ENCODE measurements at regions of chr10 and their contacts with region 1.

Region 1: DNA sequence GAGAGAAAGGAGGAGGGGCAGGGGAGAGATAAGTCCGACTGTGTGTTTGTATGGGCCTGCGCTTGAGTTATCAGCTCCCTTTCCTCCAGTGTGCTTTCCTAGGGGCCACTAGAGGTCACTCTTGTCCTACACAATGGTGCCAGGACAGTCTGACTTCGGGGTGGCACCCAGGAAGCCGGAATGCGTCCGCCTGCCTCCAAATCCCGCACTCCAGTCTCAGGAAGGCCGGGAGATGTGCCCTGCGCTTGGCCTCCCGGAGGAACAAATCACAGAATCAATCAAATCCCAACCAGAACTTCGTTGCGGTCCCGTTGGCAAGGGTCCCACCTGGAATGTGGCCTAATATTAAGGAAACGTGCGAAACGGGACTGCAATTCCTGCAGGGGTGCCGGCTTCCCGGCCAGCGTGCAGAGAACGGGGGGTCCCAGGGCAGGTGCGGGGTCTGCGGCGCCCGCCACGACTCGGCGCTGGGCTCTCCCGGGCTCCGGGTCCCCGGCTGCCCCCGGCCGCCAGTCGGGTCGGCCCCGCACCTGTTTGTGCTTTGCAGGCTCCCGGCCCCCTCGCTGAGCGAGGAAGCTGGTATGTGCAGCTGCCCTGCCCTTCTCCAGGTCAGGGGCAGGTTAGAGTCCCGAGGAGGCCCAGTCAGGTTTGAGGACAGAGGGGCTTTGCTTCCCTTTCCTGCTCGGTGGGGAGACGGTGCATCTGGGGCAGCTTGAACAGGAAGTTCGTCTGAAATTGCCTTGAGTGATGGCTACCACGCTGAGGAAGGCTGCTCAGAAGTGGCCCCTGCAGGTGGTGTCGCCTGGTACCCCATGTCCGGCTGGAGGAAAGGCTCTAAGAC is 21.0 kb upstream of the HPS1 start:
- DNase-seq: peak; percentile 79
- ATAC-seq: peak; percentile 99
- H3K4me3 ChIP-seq: peak overlapping the region; percentile 54 to 75 (median 57)
- H3K27ac ChIP-seq: no peak overlapping the region
- H3K4me1 ChIP-seq: no peaks in the 10 kb centered on the region
- H3K27me3 ChIP-seq: peaks cover 4 to 23% of the 10 kb centered on the region in 2 experiments
- CTCF ChIP-seq: peak; percentile 97
- EP300 ChIP-seq: no peak
- POLR2A ChIP-seq: no peak
- RAD21 ChIP-seq: peak; percentile 93

Region 2: GRCh38 chr10:98446661-98447221 is 21.0 kb before region 1 on chr10 and contains the start of gene HPS1:
- CTCF ChIA-PET with region 1: no interaction called
- POLR2A ChIA-PET with region 1: no interaction called
- in situ Hi-C with region 1: no loop called
- intact Hi-C with region 1: no loop called
- DNase-seq: peak; percentile 27
- ATAC-seq: peak; percentile 92
- H3K4me3 ChIP-seq: peak within 1 kb of the TSS; percentile 80 to 93 (median 86)
- H3K27ac ChIP-seq: peak within 1 kb of the TSS; percentile 72
- H3K4me1 ChIP-seq: peaks cover 24% of the 10 kb centered on the region
- H3K27me3 ChIP-seq: no peaks in the 10 kb centered on the region
- CTCF ChIP-seq: peak; percentile 32
- EP300 ChIP-seq: no peak
- POLR2A ChIP-seq: peak; percentile 74 to 83
- RAD21 ChIP-seq: 0 out of 2 replicates have a peak, but pooled peaks have one; percentile 8
- total RNA-seq, gene HPS1: 20.7 and 25.8 TPM in 2 replicates

Region 3: DNA sequence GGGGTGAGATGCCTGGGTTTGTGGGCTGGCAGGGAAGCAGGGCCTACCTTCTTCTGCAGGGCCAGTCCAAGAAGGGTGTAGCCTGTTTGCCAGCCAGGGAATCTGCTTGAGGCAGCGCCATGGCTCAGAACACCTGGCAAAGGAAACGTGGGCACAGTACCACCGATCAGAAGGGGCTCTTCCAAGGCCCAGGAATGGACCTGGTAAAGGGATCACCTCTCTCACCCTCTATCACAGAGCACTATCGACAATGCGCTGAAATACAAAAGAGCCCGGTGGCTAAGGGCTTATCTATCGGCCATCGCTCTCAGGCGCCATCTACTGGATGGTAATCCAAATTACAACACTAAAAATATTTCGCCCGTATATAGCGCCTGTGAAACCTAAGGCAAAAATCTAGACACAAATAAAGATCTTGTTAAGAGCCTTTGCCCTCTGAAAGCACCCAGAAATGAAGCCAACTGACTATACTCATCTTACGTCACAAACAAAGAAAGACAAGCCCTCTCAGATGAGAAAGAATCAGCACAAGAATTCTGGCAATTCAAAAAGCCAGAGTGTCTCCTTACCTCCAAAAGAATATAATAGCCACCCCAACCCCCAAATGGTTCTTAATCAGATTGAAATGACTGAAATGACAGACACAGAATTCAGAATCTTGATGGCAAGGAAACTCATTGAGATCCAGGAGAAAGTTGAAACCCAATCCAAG is 196.8 kb after region 1 on chr10:
- CTCF ChIA-PET with region 1: interaction called, 26 read pairs
- POLR2A ChIA-PET with region 1: no interaction called
- in situ Hi-C with region 1: loop called (anchors 5 kb)
- intact Hi-C with region 1: loop called (anchors 1 kb)
- DNase-seq: peak; percentile 34
- ATAC-seq: peak; percentile 82
- H3K4me3 ChIP-seq: no peak overlapping the region
- H3K27ac ChIP-seq: no peak overlapping the region
- H3K4me1 ChIP-seq: no peaks in the 10 kb centered on the region
- H3K27me3 ChIP-seq: no peaks in the 10 kb centered on the region
- CTCF ChIP-seq: peak; percentile 66
- EP300 ChIP-seq: no peak
- POLR2A ChIP-seq: no peak
- RAD21 ChIP-seq: peak; percentile 12; the same call in 1 of the 2 replicates

Region 4: DNA sequence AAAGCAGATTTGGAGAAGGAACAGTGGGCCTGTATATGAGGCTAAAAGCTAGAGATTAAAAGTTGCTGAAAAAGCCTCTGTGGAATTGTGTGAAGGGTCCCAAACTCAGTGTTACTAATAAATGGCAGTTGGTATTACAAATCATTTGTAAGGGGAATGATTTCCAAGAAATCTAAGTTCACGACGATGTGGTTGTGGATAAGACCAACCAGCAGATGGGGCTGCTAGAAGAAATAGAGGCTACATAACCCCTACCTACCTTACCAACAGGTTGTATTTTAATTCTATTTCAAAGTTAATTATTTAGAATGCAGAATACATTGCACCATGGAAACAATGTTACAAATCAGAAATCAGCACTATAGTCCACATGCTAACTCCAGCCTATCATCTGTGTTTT is 390.8 kb after region 1 on chr10:
- CTCF ChIA-PET with region 1: no interaction called
- POLR2A ChIA-PET with region 1: no interaction called
- in situ Hi-C with region 1: no loop called
- intact Hi-C with region 1: loop called (anchors 10 kb)
- DNase-seq: peak; percentile 3
- ATAC-seq: no peak
- H3K4me3 ChIP-seq: no peak overlapping the region
- H3K27ac ChIP-seq: no peak overlapping the region
- H3K4me1 ChIP-seq: no peaks in the 10 kb centered on the region
- H3K27me3 ChIP-seq: no peaks in the 10 kb centered on the region
- CTCF ChIP-seq: 0 out of 2 replicates have a peak, but pooled peaks have one; percentile 14
- EP300 ChIP-seq: no peak
- POLR2A ChIP-seq: no peak
- RAD21 ChIP-seq: no peak

Region 5: DNA sequence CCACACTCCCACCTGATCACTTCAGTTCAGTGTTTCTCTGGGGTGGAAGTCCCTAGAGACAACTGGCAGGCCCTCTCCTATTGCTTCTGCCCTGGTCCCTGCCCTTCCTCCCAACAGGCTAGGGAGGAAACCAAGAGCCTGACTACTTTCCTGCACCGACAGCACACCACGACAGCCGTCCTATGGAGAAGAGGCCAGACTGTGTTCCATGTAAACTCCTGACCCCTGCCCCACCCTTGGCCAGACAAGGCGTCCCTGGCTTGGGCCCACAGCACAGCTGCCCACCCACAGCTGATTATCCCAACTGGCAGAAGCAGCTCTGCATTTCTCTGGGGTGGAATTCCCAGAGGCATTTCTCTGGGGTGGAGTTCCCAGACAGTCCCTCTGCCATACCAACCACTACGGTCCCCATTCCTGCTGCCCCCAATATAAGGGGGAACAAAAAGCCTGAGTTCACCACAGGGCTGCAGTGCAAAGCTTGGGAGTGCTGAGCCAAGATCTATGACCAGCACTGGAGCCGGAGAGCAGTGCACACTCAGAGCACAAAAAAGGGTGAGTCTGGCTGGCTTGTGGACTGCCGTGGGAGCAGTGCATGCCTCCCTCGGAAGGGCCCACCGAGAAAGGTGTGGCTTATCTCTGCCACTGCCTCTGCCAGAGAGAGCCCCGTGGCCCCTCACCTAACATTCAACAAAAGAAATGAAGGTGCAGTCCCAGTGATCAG is 574.5 kb after region 1 on chr10:
- CTCF ChIA-PET with region 1: interaction called, 4 read pairs
- POLR2A ChIA-PET with region 1: no interaction called
- in situ Hi-C with region 1: loop called (anchors 25 kb)
- intact Hi-C with region 1: loop called (anchors 5 kb)
- DNase-seq: no peak
- ATAC-seq: no peak
- H3K4me3 ChIP-seq: no peak overlapping the region
- H3K27ac ChIP-seq: no peak overlapping the region
- H3K4me1 ChIP-seq: no peaks in the 10 kb centered on the region
- H3K27me3 ChIP-seq: no peaks in the 10 kb centered on the region
- CTCF ChIP-seq: no peak
- EP300 ChIP-seq: no peak
- POLR2A ChIP-seq: no peak
- RAD21 ChIP-seq: no peak

Region 6: DNA sequence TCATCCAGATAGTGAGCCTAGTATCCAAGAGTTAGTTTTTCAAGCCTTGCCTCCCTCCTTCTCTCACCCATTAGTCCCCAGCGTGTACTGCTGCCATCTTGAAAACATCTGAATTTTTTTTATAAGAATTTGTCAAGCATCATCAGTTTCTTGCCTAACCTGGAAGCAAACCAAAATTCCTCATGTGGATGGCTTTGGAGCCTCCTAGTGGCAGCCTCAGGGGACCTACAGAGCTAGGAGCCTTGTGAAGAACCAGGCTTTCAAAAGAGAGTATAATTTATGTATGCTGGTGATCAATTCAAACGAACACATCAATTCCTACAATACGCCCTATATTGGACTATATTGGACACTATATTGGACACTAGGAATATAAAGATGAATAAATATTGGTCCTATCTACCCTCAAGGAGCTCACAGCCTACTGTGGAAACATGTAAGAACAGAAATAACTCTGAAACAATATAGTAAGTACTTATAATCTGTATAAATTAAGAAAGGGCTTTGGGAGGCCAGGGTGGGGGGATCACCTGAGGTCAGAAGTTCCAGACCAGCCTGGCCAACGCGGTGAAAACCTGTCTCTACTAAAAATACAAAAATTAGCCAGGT is 704.5 kb after region 1 on chr10:
- CTCF ChIA-PET with region 1: interaction called, 3 read pairs
- POLR2A ChIA-PET with region 1: no interaction called
- in situ Hi-C with region 1: no loop called
- intact Hi-C with region 1: loop called (anchors 1 kb)
- DNase-seq: peak; percentile 32
- ATAC-seq: peak; percentile 81
- H3K4me3 ChIP-seq: no peak overlapping the region
- H3K27ac ChIP-seq: no peak overlapping the region
- H3K4me1 ChIP-seq: no peaks in the 10 kb centered on the region
- H3K27me3 ChIP-seq: no peaks in the 10 kb centered on the region
- CTCF ChIP-seq: peak; percentile 65
- EP300 ChIP-seq: no peak
- POLR2A ChIP-seq: no peak
- RAD21 ChIP-seq: no peak

Region 7: GRCh38 chr10:99248824-99249223 is 781.1 kb after region 1 on chr10:
- CTCF ChIA-PET with region 1: interaction called, 15 read pairs
- POLR2A ChIA-PET with region 1: no interaction called
- in situ Hi-C with region 1: loop called (anchors 10 kb)
- intact Hi-C with region 1: loop called (anchors 1 kb)
- DNase-seq: no peak
- ATAC-seq: no peak
- H3K4me3 ChIP-seq: no peak overlapping the region
- H3K27ac ChIP-seq: no peak overlapping the region
- H3K4me1 ChIP-seq: no peaks in the 10 kb centered on the region
- H3K27me3 ChIP-seq: no peaks in the 10 kb centered on the region
- CTCF ChIP-seq: no peak
- EP300 ChIP-seq: no peak
- POLR2A ChIP-seq: no peak
- RAD21 ChIP-seq: no peak

Region 8: GRCh38 chr10:99276848-99277486 is 809.2 kb after region 1 on chr10:
- CTCF ChIA-PET with region 1: interaction called, 9 read pairs
- POLR2A ChIA-PET with region 1: no interaction called
- in situ Hi-C with region 1: no loop called
- intact Hi-C with region 1: loop called (anchors 2 kb)
- DNase-seq: peak; percentile 17
- ATAC-seq: no peak
- H3K4me3 ChIP-seq: no peak overlapping the region
- H3K27ac ChIP-seq: no peak overlapping the region
- H3K4me1 ChIP-seq: peaks cover 6% of the 10 kb centered on the region; the same call in 1 of the 2 replicates
- H3K27me3 ChIP-seq: peaks cover 0 to 3% of the 10 kb centered on the region in 2 experiments; a peak in 1 of 5 replicates
- CTCF ChIP-seq: peak; percentile 60
- EP300 ChIP-seq: no peak
- POLR2A ChIP-seq: no peak
- RAD21 ChIP-seq: peak; percentile 36; the same call in 1 of the 2 replicates

Measured in HepG2 (cell line).